MCF 10A (cell line): ENCODE measurements at regions of chr4 and their contacts with region 1.

Region 1: DNA sequence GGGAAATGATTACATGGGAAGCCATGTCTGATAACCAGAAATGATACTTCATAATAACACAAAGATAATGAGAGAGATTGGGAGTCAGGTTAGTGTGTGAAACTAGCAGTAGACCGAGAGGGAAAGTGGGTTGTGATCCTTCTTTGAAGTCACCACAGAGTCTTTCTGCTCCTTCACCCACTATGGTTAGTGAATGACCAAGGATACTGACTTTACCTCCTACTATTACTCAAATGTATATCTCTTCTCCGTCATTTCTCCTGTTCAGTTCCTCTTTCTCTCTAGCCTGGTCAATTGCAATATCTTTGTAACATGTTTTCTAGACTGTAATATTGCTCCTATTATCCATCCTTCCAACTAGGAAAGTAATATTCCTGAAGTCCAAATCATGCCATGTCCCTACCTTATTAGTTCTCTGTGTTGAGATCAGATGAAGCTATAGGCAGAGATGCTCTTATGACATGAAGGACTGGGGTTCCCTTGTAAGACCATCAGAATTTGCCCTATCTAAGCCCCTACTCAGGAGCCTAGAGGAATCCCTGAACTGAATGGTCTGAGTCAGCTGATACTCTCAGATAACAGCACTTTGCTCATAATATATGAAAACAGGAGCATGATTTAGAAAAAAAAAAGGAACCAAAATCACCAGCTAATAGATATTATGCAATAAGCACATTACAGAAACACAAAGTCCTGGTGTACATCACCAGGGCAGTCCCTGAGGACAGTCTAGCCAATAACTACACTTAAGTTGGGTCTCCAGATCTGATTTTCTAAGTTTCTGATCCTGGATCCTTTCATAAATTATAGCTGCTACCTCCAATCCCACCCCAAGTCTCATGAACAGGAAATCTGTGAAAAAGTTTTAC is 81.2 kb downstream of the SHROOM3 start:
- DNase-seq: no peak
- H3K4me3 Mint-ChIP-seq: no peak overlapping the region
- H3K27ac Mint-ChIP-seq: no peak overlapping the region
- H3K4me1 Mint-ChIP-seq: peaks cover 4% of the 10 kb centered on the region
- H3K27me3 Mint-ChIP-seq: no peaks in the 10 kb centered on the region
- CTCF ChIP-seq: no peak

Region 2: GRCh38 chr4:76733068-76733771 is 217.0 kb after region 1 on chr4:
- CTCF ChIA-PET with region 1: interaction called, 26 read pairs
- POLR2A ChIA-PET with region 1: no interaction called
- intact Hi-C with region 1: loop called (anchors 1 kb)
- DNase-seq: peak; percentile 61
- H3K4me3 Mint-ChIP-seq: no peak overlapping the region
- H3K27ac Mint-ChIP-seq: no peak overlapping the region
- H3K4me1 Mint-ChIP-seq: peaks cover 13% of the 10 kb centered on the region
- H3K27me3 Mint-ChIP-seq: no peaks in the 10 kb centered on the region
- CTCF ChIP-seq: peak; percentile 47

Region 3: DNA sequence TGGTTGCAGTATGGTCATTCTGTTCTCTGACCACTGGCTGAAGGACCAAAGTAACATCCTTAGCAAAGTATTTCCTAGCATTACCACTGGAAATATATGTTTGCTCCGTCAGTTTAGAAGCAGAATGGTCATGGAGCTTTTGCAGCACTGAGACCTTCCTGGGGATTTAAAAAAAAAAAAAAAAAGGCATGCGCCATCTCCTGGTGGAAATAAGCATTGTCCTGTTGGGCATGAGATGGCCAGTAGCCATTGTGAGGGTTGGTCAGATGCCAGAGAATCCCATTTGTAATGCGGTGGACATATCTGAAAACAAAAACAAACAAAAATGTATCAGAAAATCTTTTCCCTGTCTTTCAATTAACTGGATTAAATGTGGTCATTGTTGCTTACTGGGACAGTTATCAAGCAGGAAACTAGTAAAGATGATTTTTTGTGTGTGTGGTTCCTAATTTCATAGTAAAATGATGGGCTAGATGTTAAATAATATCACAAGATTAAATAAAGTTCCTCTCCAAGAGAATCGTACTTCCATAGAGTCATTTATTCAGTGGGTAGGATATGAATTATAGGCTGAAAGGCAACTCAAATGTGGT is 242.2 kb after region 1 on chr4:
- CTCF ChIA-PET with region 1: interaction called, 18 read pairs
- POLR2A ChIA-PET with region 1: no interaction called
- intact Hi-C with region 1: loop called (anchors 1 kb)
- DNase-seq: peak; percentile 80
- H3K4me3 Mint-ChIP-seq: no peak overlapping the region
- H3K27ac Mint-ChIP-seq: no peak overlapping the region
- H3K4me1 Mint-ChIP-seq: peaks cover 8% of the 10 kb centered on the region
- H3K27me3 Mint-ChIP-seq: no peaks in the 10 kb centered on the region
- CTCF ChIP-seq: peak; percentile 52

Region 4: DNA sequence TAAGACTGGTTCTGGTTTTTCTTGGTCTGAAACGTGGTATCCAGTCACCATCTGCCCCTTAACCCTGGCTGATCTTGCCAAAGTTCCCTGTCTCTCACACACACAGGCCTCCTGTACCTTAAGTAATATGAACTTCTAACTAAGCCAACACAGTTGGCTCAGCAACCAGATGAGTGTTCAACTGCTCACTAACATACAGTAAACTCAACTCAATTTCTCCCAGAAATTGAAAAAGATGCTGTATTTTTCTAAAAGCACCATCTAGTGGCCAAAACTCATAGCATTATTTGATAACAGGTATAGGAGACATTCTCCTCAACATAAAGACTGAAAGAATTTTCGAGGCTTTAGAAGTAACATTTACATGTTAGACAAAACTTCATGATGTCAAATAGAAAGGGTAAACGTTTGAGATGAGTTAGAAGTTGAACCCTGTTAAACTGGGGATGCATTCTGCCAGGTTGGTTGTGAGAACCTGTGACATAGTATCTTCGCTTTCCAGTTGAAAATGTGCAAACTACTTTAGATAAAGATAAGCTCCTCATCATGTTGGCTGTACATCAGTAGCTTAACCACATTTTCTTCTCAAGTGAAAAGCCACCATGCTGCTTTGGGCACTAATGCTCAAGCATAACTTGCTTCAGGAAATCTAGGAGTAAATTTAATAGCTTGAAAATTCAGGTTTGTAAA is 528.4 kb after region 1 on chr4:
- CTCF ChIA-PET with region 1: no interaction called
- POLR2A ChIA-PET with region 1: interaction called, 3 read pairs
- intact Hi-C with region 1: loop called (anchors 1 kb)
- DNase-seq: peak; percentile 47
- H3K4me3 Mint-ChIP-seq: peak overlapping the region; percentile 30
- H3K27ac Mint-ChIP-seq: peak overlapping the region; percentile 82
- H3K4me1 Mint-ChIP-seq: peaks cover 20% of the 10 kb centered on the region
- H3K27me3 Mint-ChIP-seq: no peaks in the 10 kb centered on the region
- CTCF ChIP-seq: peak; percentile 44